ENCODE measurements at regions of chr6 and their contacts with region 1.

Region 1: GRCh38 chr6:22068561-22069305 is 228.1 kb downstream of the PRL start:
- DNase-seq: peak; percentile 13
- H3K4me3 Mint-ChIP-seq: peak overlapping the region; percentile 59
- H3K27ac Mint-ChIP-seq: peak overlapping the region; percentile 98
- H3K4me1 Mint-ChIP-seq: peaks cover 71% of the 10 kb centered on the region
- H3K27me3 Mint-ChIP-seq: no peaks in the 10 kb centered on the region

Region 2: DNA sequence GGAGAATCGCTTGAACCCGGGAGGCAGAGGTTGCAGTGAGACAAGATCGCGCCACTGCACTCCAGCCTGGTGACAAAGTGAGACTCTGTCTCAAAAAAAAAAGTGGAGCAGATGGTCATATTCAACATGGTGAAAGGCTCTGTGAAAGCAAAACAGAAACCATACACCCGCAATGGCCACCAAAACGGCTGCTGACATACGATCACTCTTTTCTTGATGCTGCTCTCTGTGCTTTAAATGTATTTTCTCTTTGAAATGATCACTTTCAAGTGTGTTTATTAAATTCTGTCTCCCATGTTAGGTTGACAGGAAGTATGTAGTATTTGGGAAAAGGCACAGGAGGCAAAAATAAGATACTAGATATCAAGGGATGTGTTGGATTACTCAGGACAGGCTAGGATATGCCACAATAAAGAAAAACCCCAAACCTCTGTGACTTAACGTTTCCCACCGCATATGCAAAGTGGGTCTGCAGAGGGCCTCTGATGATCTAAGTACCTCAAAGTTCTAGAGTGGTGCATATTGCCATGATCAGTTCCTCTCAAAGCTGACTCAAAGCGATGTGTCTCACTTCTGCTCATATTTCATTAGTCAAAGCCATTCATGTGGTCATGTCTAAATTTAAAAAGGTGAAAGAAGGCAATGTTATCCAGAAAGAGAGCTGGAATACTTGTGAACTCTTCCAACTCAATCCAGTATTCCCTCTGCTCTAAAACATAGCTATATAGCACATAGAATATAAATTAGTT is 630.3 kb before region 1 on chr6:
- intact Hi-C with region 1: loop called (anchors 1 kb)
- DNase-seq: peak; percentile 23
- H3K4me3 Mint-ChIP-seq: peak overlapping the region; percentile 74
- H3K27ac Mint-ChIP-seq: peak overlapping the region; percentile 96
- H3K4me1 Mint-ChIP-seq: peaks cover 22% of the 10 kb centered on the region
- H3K27me3 Mint-ChIP-seq: peaks cover 14% of the 10 kb centered on the region

Region 3: GRCh38 chr6:21634582-21634981 is 434.2 kb before region 1 on chr6:
- intact Hi-C with region 1: no loop called
- DNase-seq: no peak
- H3K4me3 Mint-ChIP-seq: no peak overlapping the region
- H3K27ac Mint-ChIP-seq: no peak overlapping the region
- H3K4me1 Mint-ChIP-seq: no peaks in the 10 kb centered on the region
- H3K27me3 Mint-ChIP-seq: no peaks in the 10 kb centered on the region

Region 4: DNA sequence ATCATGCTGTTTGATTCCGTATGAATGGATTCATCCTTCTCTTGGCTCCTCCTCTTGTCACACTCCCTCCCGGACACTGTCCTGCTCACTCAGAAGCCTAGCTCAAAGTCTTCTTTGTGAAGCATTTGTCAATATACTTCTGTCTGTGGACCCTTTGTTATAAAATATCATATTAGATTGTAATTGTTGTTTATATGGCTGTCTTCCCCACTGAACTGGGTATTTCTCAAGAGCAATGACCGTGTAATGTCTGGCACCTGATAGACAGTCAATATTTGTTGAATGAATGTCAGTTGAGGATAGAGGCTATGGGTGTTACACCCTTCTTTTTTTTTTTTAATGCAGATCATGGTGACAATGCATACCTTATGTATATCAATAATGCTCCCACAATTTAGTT is 139.9 kb before region 1 on chr6:
- intact Hi-C with region 1: loop called (anchors 2 kb)
- DNase-seq: no peak
- H3K4me3 Mint-ChIP-seq: no peak overlapping the region
- H3K27ac Mint-ChIP-seq: no peak overlapping the region
- H3K4me1 Mint-ChIP-seq: peaks cover 34% of the 10 kb centered on the region
- H3K27me3 Mint-ChIP-seq: no peaks in the 10 kb centered on the region

Region 5: DNA sequence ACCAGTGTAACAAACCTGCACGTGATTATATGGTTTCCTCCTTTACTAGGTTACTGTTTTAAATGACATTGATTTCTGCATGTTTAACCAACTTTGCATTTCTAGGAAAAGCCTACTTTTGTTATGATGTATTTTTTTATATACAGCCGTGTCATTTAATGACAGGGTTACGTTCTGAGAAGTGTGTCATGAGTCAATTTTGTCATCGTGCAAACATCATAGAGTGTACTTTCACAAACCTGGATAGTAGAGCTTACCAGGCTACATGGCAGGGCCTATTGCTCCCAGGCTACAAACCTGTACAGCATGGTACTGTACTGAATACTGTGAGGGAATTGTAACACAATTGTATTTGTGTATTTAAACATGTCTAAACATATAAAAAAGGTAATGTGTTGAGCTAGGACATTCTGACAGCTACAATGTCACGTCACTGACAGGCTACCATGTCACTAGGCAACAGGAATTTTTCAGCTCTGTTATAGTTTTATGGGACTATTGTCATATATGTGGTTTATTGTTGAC is 22.8 kb after region 1 on chr6:
- intact Hi-C with region 1: loop called (anchors 1 kb)
- DNase-seq: no peak
- H3K4me3 Mint-ChIP-seq: no peak overlapping the region
- H3K27ac Mint-ChIP-seq: peak overlapping the region; percentile 57
- H3K4me1 Mint-ChIP-seq: peaks cover 18% of the 10 kb centered on the region
- H3K27me3 Mint-ChIP-seq: no peaks in the 10 kb centered on the region

Region 6: DNA sequence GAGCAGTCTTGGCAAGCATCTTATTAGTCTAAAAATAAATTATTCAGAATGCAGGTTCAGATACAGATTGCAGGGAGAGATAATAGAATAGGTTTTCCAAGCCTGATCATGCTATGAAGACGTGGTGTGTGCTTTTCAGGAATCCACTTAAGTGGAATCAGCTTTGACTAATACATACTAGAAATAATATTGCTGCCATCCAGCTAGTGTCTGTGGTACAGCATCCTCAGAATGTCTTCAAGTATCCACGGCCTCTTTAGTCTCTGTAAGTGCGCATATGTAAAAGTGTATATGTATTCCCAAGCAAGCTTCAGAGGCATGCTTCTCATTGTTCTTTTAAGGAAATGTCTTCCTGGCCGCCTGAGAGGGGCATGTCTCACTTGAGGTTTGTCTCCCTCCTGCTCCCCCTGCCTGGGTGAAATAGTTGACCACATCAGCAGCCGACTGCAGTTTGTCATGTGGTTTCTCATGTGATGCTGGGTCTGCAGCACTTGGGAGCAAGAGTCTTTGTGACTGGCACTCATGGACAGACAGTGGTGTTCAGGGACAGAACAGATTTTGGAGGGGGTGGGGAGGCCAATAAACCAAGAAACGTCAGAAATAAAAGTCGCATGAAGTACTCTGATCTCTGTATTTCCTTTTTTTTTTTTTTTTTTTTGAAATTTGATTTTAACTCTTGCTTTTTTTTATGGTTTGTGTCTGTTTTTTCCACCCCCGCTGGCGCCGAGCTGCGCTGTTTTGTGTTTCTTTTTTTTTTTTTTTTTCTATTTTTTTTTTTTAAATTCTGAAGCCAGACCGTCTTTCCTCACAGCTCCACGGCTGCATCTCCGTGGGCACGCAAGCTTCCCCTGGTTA is 77.3 kb after region 1 on chr6:
- intact Hi-C with region 1: loop called (anchors 2 kb)
- DNase-seq: no peak
- H3K4me3 Mint-ChIP-seq: peak overlapping the region; percentile 75
- H3K27ac Mint-ChIP-seq: peak overlapping the region; percentile 44
- H3K4me1 Mint-ChIP-seq: peaks cover 37% of the 10 kb centered on the region
- H3K27me3 Mint-ChIP-seq: peaks cover 40% of the 10 kb centered on the region

Region 7: DNA sequence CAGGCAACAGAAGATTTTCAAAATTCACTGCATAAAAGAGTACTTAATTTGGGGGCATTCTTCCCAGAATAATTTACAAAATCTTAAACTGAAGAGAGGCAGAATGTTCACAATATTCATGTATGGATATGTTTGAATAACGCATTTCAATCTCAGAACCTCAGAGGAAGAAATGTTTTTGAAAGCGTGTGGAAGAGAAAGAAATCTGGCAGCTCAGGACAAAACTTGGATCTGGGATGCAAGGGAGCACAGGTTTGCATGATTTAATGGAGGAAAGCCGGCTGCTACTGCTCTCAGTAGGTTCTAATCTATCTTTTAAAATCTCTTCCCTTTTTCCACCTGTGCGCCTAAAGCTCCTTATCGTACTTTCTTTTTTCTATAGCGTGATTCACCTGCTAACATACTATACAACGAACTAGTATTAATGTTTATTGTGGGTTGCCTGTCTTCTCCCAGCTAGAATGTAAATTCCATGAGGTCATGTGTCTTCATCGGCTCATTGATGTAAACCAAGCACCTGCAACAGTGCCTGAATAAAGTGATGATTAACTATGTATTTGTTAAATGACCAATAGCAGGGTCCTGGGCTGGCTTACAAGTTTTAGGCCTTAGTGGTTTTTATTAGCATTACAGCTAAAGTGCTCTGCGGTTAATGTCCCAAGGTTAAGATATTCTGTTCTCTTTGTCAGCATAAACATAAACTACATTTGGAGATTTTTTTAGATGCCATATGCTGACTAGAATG is 212.8 kb after region 1 on chr6:
- intact Hi-C with region 1: no loop called
- DNase-seq: no peak
- H3K4me3 Mint-ChIP-seq: no peak overlapping the region
- H3K27ac Mint-ChIP-seq: no peak overlapping the region
- H3K4me1 Mint-ChIP-seq: no peaks in the 10 kb centered on the region
- H3K27me3 Mint-ChIP-seq: no peaks in the 10 kb centered on the region